ENCODE measurements at regions of chr6 and their contacts with region 1.

Region 1: DNA sequence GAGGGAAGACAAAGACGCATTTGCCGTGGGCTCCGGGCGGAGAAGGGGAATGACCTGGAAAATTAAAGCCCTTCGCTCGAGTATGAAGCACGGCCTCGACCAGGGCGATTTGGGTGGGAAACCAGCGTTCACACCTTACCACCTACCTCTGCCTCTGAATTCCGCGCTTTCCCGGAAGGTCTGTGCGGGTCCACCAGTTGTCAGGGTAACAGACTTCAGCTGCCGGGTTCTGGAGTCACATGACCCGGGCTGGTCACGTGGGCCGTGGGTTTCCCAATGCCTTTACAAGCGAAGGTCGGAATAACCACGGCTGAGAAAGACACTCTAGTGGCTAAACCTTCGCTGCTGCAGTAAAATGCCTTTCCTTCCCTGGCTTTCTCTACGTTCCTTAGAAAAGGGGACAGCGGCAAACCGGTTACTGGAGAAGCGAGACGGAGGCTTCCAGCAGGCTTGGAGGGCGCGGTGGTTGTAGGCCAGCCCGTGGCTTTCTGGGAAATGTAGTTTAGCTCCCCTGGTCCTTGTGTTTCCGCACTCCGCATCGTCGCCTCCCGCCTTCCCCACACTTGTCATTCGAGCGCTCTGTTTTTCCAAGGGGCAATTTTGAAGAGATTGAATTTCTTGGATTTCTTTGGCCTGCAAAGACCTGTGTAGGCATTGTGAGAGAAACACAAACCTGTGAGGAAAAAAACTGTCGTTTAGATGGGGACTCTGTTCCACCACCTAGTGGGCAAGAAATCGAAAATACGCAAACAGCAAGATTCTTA is at the start of gene CEP162:
- DNase-seq: peak; percentile 82
- ATAC-seq: peak; percentile 92
- H3K4me3 Mint-ChIP-seq: peak within 1 kb of the TSS; percentile 99
- H3K27ac Mint-ChIP-seq: peak within 1 kb of the TSS; percentile 95
- H3K4me1 Mint-ChIP-seq: peaks cover 19% of the 10 kb centered on the region
- H3K27me3 Mint-ChIP-seq: peaks cover 13% of the 10 kb centered on the region
- CTCF ChIP-seq: no peak
- total RNA-seq, gene CEP162: 7.9 and 13.8 TPM in 2 replicates

Region 2: GRCh38 chr6:82247634-82248232 is 1979.9 kb before region 1 on chr6 and contains the start of gene IBTK:
- CTCF ChIA-PET with region 1: no interaction called
- POLR2A ChIA-PET with region 1: no interaction called
- intact Hi-C with region 1: loop called (anchors 2 kb)
- DNase-seq: peak; percentile 89
- ATAC-seq: peak; percentile 90
- H3K4me3 Mint-ChIP-seq: peak within 1 kb of the TSS; percentile 97
- H3K27ac Mint-ChIP-seq: peak within 1 kb of the TSS; percentile 93
- H3K4me1 Mint-ChIP-seq: peaks cover 33% of the 10 kb centered on the region
- H3K27me3 Mint-ChIP-seq: no peaks in the 10 kb centered on the region
- CTCF ChIP-seq: no peak
- total RNA-seq, gene IBTK: 25.6 and 30.1 TPM in 2 replicates

Region 3: DNA sequence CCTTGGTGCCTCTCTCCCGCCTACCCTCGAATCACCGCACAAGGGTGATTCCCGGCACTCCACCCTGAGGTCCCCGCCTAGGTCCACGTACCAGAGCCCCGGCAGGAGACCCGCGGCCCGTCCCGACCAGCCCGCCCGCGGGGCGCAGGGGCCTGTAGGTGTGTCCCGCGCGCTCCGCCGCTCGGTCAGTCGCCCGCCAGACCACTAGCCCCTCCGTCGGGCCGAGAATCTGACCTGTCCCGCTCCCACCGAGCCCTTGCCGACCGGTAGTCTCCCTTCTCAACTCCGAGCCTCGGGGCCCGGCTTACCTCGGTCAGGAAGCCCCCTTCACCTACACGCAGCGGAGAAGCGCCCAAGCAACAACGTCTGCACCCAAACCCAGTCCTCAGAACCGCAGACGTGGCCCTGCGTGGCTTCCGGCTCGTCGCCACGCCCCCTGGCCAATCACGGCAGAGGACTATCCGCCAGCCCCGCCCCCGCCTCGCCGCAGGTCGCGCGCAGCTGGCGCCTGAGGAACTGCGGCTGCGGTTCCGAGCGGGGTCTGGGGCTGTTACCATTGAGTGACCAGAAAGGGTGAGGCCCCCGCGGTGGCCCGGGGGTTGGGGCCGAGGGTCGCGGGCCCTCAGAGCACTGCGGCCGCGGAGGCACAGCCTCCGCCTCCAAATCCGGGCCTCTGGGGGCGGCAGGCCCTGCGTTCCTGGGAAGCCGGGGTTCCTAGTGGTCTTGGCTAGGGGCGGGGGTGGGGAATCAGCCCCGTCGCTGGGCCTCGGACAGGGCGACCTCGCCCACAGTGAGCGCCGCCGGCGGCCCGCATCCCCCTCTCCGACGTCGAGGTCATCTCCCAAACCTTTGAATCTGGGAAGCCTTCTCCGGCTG is 1034.5 kb before region 1 on chr6 and contains the starts of genes PGM3 and RWDD2A:
- CTCF ChIA-PET with region 1: no interaction called
- POLR2A ChIA-PET with region 1: no interaction called
- intact Hi-C with region 1: loop called (anchors 2 kb)
- DNase-seq: peak; percentile 91
- ATAC-seq: peak; percentile 97
- H3K4me3 Mint-ChIP-seq: peak within 1 kb of the TSS; percentile 96
- H3K27ac Mint-ChIP-seq: peak within 1 kb of the TSS; percentile 91
- H3K4me1 Mint-ChIP-seq: peaks cover 31% of the 10 kb centered on the region
- H3K27me3 Mint-ChIP-seq: no peaks in the 10 kb centered on the region
- CTCF ChIP-seq: no peak
- total RNA-seq, gene PGM3: 18.2 and 20.1 TPM in 2 replicates
- total RNA-seq, gene RWDD2A: 1.7 and 1.8 TPM in 2 replicates

Region 4: DNA sequence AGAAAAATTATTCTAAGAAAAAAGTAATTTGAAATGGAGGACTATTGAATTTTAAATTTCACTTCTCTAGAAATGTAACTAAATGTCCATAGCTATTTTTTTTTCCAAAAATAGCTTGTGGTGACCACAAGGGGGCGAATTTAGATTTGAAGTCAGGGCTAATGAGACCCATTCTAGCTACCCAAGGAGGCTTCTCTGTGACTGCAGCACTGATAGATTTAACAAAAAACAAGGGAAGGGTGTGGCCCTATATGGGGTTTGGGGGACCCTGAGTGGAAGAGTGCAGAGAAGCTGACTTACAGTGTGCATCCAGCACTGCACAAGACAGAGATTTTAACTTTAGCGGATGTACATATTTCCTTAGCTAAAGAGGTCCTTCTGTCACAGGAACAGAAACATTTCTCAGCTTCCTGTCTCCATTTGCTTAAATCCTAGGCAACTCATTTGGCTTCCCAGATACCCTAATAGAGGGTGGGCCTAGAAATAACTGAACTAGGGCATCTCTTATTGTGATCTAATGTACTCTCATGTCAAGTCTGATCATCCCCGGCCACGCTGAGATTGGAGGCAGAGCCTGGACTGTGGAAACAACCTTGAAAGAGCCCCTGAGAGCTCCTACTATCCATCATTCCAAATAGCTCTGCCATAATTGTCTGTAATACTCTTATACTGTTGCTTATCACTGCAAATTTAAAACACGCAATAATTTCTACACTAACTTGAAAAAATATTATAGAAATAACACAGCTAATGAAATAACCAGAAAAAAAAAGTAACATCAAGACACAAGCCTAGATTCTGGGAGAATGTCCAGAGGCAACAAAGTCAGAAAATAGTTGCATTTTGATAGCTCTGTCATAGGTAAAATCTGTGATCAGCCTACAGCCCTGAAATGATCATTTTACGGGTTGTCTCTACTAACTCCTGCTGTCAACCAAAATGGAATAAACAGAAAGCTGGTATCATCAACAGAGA is 612.3 kb before region 1 on chr6:
- CTCF ChIA-PET with region 1: interaction called, 12 read pairs
- POLR2A ChIA-PET with region 1: no interaction called
- intact Hi-C with region 1: no loop called
- DNase-seq: no peak
- ATAC-seq: no peak
- H3K4me3 Mint-ChIP-seq: no peak overlapping the region
- H3K27ac Mint-ChIP-seq: no peak overlapping the region
- H3K4me1 Mint-ChIP-seq: no peaks in the 10 kb centered on the region
- H3K27me3 Mint-ChIP-seq: no peaks in the 10 kb centered on the region
- CTCF ChIP-seq: no peak

Region 5: DNA sequence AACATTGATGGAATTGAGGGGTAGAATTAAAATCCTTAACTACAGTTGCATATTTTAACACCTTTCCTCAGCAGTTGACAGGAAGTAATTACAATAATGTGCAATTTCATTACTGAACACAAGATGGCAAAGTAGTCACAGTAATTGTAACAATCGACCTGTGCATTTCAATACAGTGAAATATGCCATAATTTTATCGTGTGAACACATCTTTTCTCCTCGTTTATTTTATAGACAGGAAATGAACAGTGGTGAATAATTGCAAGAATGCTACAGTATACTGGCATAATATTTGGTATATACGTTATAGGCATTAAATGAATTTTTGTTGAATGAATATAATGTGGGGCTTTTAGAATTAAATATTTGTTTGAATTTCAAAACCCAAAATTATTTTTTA is 343.1 kb before region 1 on chr6:
- CTCF ChIA-PET with region 1: interaction called, 21 read pairs
- POLR2A ChIA-PET with region 1: interaction called, 3 read pairs
- intact Hi-C with region 1: loop called (anchors 2 kb)
- DNase-seq: no peak
- ATAC-seq: peak; percentile 76
- H3K4me3 Mint-ChIP-seq: no peak overlapping the region
- H3K27ac Mint-ChIP-seq: no peak overlapping the region
- H3K4me1 Mint-ChIP-seq: peaks cover 45% of the 10 kb centered on the region
- H3K27me3 Mint-ChIP-seq: no peaks in the 10 kb centered on the region
- CTCF ChIP-seq: no peak

Region 6: DNA sequence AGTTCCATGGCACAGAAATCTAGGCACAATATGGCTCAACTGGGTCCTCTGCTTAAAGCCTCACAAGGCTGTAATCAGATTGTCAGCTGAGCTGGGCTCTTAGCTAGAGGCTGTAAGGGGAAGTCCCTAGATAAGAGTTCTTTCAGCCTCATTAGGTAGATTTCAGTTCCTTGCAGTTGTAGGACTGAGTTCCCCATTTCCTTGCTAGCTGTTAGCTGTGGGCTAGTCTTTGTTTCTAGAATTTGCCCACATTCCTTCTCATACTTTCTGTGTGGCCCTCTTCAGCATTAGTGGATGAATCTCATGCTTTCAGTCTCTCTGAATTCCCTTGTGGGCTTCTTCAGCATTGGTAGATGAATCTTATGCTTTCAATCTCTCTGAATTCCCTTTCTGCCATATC is 265.0 kb before region 1 on chr6:
- CTCF ChIA-PET with region 1: no interaction called
- POLR2A ChIA-PET with region 1: no interaction called
- intact Hi-C with region 1: no loop called
- DNase-seq: no peak
- ATAC-seq: peak; percentile 66
- H3K4me3 Mint-ChIP-seq: no peak overlapping the region
- H3K27ac Mint-ChIP-seq: no peak overlapping the region
- H3K4me1 Mint-ChIP-seq: no peaks in the 10 kb centered on the region
- H3K27me3 Mint-ChIP-seq: no peaks in the 10 kb centered on the region
- CTCF ChIP-seq: no peak

Region 7: GRCh38 chr6:84515067-84515466 is 287.5 kb after region 1 on chr6:
- CTCF ChIA-PET with region 1: no interaction called
- POLR2A ChIA-PET with region 1: no interaction called
- intact Hi-C with region 1: no loop called
- DNase-seq: no peak
- ATAC-seq: no peak
- H3K4me3 Mint-ChIP-seq: no peak overlapping the region
- H3K27ac Mint-ChIP-seq: no peak overlapping the region
- H3K4me1 Mint-ChIP-seq: no peaks in the 10 kb centered on the region
- H3K27me3 Mint-ChIP-seq: no peaks in the 10 kb centered on the region
- CTCF ChIP-seq: no peak

Region 8: DNA sequence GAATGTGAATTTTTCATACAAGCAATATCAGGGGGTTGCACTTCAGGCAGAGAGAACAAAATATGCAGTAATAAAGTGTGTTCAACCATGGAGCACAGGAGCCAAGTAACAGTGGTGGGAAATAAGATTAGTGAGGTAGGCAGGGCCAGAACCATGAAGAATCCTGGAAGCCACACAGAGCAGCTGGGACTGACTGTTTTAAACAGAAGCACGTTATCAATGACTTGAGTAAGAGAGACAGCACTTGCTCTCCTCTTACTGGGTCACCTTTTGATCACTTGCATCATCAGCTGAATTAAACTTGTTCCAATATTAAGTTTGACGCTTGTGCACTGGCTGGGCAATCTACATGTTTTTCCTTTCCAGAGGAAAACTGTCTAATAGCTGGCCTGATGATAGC is 298.3 kb after region 1 on chr6:
- CTCF ChIA-PET with region 1: no interaction called
- POLR2A ChIA-PET with region 1: no interaction called
- intact Hi-C with region 1: no loop called
- DNase-seq: no peak
- ATAC-seq: no peak
- H3K4me3 Mint-ChIP-seq: no peak overlapping the region
- H3K27ac Mint-ChIP-seq: no peak overlapping the region
- H3K4me1 Mint-ChIP-seq: no peaks in the 10 kb centered on the region
- H3K27me3 Mint-ChIP-seq: no peaks in the 10 kb centered on the region
- CTCF ChIP-seq: no peak

Region 9: GRCh38 chr6:85460921-85461797 is 1233.5 kb after region 1 on chr6:
- CTCF ChIA-PET with region 1: no interaction called
- POLR2A ChIA-PET with region 1: no interaction called
- intact Hi-C with region 1: loop called (anchors 10 kb)
- DNase-seq: no peak
- ATAC-seq: peak; percentile 47
- H3K4me3 Mint-ChIP-seq: peak overlapping the region; percentile 12
- H3K27ac Mint-ChIP-seq: peak overlapping the region; percentile 62
- H3K4me1 Mint-ChIP-seq: peaks cover 93% of the 10 kb centered on the region
- H3K27me3 Mint-ChIP-seq: no peaks in the 10 kb centered on the region
- CTCF ChIP-seq: no peak

Region 10: GRCh38 chr6:85612690-85613474 is 1385.3 kb after region 1 on chr6:
- CTCF ChIA-PET with region 1: no interaction called
- POLR2A ChIA-PET with region 1: no interaction called
- intact Hi-C with region 1: no loop called
- DNase-seq: no peak
- ATAC-seq: no peak
- H3K4me3 Mint-ChIP-seq: no peak overlapping the region
- H3K27ac Mint-ChIP-seq: no peak overlapping the region
- H3K4me1 Mint-ChIP-seq: no peaks in the 10 kb centered on the region
- H3K27me3 Mint-ChIP-seq: no peaks in the 10 kb centered on the region
- CTCF ChIP-seq: no peak